Motor neuron (in vitro differentiated cells): ENCODE measurements at regions of chr4 and their contacts with region 1.

Region 1: DNA sequence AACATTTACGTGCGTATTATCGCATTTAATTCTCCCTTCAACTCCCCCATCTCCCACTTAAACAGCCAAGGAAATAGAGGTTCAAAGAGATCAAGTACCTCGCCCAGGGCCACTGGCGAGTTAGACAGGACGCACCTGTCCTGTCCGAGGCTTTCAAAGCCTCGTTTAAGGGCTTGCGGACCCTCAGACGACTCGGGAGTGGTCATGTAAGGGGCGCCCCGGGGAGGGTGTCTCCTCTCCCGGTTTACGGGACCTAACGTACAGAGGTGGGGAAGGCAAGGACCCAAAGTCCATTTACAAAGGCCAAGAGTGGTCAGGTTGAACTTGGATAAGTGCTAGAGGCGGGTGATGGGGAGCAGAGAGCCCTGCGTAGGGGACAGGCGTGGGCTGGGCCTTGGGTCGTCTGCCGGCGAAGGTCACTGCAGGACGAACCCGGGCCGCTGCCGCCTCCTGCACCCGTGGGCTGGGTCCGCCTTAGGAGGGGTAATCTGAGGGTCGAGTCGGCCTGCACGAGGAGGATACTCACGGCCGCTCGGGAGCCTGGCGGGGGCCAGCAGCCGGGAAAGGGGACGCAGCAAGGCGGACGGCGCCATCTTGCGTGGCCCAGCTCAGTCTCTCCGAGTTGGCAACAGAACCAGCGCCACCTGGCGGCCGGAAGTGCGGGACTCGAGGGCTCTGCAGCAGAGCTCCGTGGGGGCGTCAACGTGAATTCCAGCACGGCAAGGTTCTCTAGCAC is 5.9 kb upstream of the NAA15 start:
- ATAC-seq: peak; percentile 94 to 99 (median 99)
- H3K4me3 ChIP-seq: peak overlapping the region; percentile 57 to 90 (median 74)
- H3K27ac ChIP-seq: peak overlapping the region; percentile 66 to 92
- H3K4me1 ChIP-seq: peaks cover 9 to 19% of the 10 kb centered on the region in 2 donors

Region 2: GRCh38 chr4:139083956-139084803 is 211.2 kb before region 1 on chr4:
- in situ Hi-C with region 1: loop called in 1 of 9 experiments (anchors 25 kb)
- ATAC-seq: peak; percentile 59 to 77 (median 72)
- H3K4me3 ChIP-seq: peak overlapping the region; percentile 59 to 94 (median 64)
- H3K27ac ChIP-seq: peak overlapping the region; percentile 84 to 88
- H3K4me1 ChIP-seq: peaks cover 0 to 8% of the 10 kb centered on the region in 2 donors

Region 3: GRCh38 chr4:139177868-139178611 is 117.3 kb before region 1 on chr4:
- in situ Hi-C with region 1: loop called in 1 of 9 experiments (anchors 25 kb)
- ATAC-seq: peak; percentile 46 to 74 (median 66)
- H3K4me3 ChIP-seq: peak overlapping the region; percentile 64 to 98 (median 89)
- H3K27ac ChIP-seq: peak overlapping the region; percentile 91 to 92
- H3K4me1 ChIP-seq: peaks cover 5 to 15% of the 10 kb centered on the region in 2 donors